Common myeloid progenitor, CD34-positive (primary cell): ENCODE measurements at regions of chr17 and their contacts with region 1.

Region 1: GRCh38 chr17:67879662-67880061 is 54.4 kb downstream of the BPTF start:
- DNase-seq: no peak
- H3K4me3 ChIP-seq: no peak overlapping the region
- H3K27ac ChIP-seq: no peak overlapping the region
- H3K4me1 ChIP-seq: no peaks in the 10 kb centered on the region
- H3K27me3 ChIP-seq: no peaks in the 10 kb centered on the region

Region 2: GRCh38 chr17:67862614-67863217 is 16.9 kb before region 1 on chr17:
- CTCF ChIA-PET with region 1: no interaction called
- POLR2A ChIA-PET with region 1: no interaction called
- DNase-seq: peak; percentile 12 to 31 (median 19)
- H3K4me3 ChIP-seq: no peak overlapping the region
- H3K27ac ChIP-seq: no peak overlapping the region
- H3K4me1 ChIP-seq: peaks cover 0 to 17% (median 6%) of the 10 kb centered on the region in 4 experiments
- H3K27me3 ChIP-seq: no peaks in the 10 kb centered on the region

Region 3: GRCh38 chr17:67891581-67892054 is 12.0 kb after region 1 on chr17:
- CTCF ChIA-PET with region 1: interaction called, 11 read pairs
- POLR2A ChIA-PET with region 1: no interaction called
- DNase-seq: peak in 2 of 3 donors; percentile 4 to 5
- H3K4me3 ChIP-seq: no peak overlapping the region
- H3K27ac ChIP-seq: no peak overlapping the region
- H3K4me1 ChIP-seq: no peaks in the 10 kb centered on the region
- H3K27me3 ChIP-seq: no peaks in the 10 kb centered on the region